KBM-7 (cell line): ENCODE measurements at regions of chr1 and their contacts with region 1.

Region 1: GRCh38 chr1:10867138-10867721 is 70.8 kb upstream of the CASZ1 start:
- DNase-seq: peak; percentile 68

Region 2: DNA sequence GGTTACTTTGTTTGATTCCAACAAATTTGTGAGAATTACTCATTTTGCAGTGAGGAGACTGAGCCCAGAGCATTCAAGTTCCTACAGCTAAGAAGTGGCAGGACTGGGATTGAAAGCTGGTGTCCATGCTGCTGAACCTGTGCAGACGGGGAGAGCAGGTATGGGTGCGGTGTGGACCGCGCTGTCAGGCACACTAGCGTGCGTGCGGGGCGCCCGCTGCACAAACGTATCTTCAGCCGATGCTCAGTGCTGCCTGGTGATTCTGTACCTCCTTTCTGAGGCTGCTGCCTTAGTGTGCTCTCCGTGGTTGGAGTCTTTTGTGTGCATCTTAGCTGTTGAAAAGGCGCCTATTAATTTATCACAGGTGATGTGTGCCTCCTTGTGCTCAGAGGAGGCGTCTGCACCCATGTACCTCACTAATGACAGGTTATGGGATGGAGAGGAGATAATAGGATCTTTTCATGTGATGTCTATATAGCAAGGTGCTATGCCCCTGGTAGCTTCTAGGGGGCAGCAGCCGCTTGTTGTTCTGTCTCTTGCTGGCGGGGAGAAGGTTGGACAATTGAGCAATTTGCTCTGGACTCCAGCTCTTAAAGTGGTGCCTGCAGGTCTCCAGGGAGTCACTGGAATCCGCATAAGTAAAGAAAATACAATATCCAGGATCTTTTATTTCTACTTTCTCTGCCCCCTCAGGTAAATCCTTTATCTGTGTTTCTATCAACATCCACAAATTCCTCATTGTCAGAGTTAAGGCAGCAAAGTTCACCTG is 359.9 kb before region 1 on chr1:
- in situ Hi-C with region 1: loop called (anchors 25 kb)
- DNase-seq: peak; percentile 77